CD8-positive, alpha-beta T cell (primary cell): ENCODE measurements at regions of chr5 and their contacts with region 1.

Region 1: DNA sequence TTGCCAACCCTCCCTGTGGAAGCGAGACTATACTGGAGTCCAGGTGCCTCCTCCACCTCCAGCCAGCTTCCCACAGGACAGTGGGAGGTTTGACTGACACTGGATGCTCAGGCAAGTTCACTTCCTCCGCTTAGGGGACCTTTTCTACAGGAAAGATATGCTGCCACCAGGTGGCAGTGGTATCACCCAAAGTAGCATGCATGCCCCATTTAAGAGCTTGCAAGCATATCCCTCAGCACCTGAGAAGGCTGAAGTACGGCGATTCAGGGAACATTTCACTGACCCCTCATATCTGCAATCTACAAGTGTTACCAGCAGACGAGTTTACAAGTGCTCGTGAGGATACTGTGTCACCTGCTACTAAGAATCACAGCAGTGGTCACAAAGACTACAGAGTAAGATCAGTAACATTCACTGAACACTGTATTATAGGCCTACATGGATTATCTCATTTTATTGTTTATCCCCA is 75.5 kb downstream of the KLHL3 start:
- DNase-seq: peak; percentile 37 to 84 (median 74)
- ATAC-seq: peak; percentile 94
- H3K4me3 ChIP-seq: no peak overlapping the region
- H3K4me3 Mint-ChIP-seq: no peak overlapping the region
- H3K27ac ChIP-seq: no peak overlapping the region
- H3K27ac Mint-ChIP-seq: no peak overlapping the region
- H3K4me1 ChIP-seq: no peaks in the 10 kb centered on the region
- H3K4me1 Mint-ChIP-seq: peaks cover 11% of the 10 kb centered on the region
- H3K27me3 ChIP-seq: no peaks in the 10 kb centered on the region
- H3K27me3 Mint-ChIP-seq: no peaks in the 10 kb centered on the region
- CTCF ChIP-seq: peak; percentile 75

Region 2: DNA sequence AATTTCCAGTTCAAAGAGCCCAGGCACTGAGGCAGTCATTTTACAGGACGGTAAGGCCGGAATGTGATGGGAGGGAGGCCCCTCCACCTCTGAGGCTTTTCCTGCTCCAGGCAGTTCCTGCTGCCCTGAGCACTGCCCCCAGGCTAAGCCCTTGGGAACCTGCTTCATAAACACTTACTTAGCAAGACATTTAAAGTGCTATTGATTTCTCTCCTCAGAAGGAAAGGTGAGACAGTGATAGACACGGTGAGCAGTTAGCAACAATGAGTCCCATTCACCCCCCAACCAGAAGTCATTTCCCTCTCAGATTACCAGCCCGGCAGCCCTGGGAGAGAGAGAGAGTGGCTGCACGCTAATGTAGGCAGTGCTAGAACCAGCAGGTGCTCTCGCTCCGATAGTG is 623.7 kb before region 1 on chr5:
- CTCF ChIA-PET with region 1: no interaction called
- POLR2A ChIA-PET with region 1: no interaction called
- intact Hi-C with region 1: no loop called
- DNase-seq: no peak
- ATAC-seq: no peak
- H3K4me3 ChIP-seq: no peak overlapping the region
- H3K4me3 Mint-ChIP-seq: no peak overlapping the region
- H3K27ac ChIP-seq: no peak overlapping the region
- H3K27ac Mint-ChIP-seq: no peak overlapping the region
- H3K4me1 ChIP-seq: no peaks in the 10 kb centered on the region
- H3K4me1 Mint-ChIP-seq: no peaks in the 10 kb centered on the region
- H3K27me3 ChIP-seq: no peaks in the 10 kb centered on the region
- H3K27me3 Mint-ChIP-seq: peaks cover 4% of the 10 kb centered on the region
- CTCF ChIP-seq: no peak

Region 3: GRCh38 chr5:137629646-137630045 is 30.7 kb before region 1 on chr5:
- CTCF ChIA-PET with region 1: interaction called, 26 read pairs
- POLR2A ChIA-PET with region 1: no interaction called
- intact Hi-C with region 1: loop called in 1 of 2 experiments (anchors 1 kb)
- DNase-seq: peak in 3 of 9 experiments; percentile 13 to 69 (median 58)
- ATAC-seq: peak; percentile 71
- H3K4me3 ChIP-seq: no peak overlapping the region
- H3K4me3 Mint-ChIP-seq: no peak overlapping the region
- H3K27ac ChIP-seq: no peak overlapping the region
- H3K27ac Mint-ChIP-seq: no peak overlapping the region
- H3K4me1 ChIP-seq: no peaks in the 10 kb centered on the region
- H3K4me1 Mint-ChIP-seq: no peaks in the 10 kb centered on the region
- H3K27me3 ChIP-seq: no peaks in the 10 kb centered on the region
- H3K27me3 Mint-ChIP-seq: no peaks in the 10 kb centered on the region
- CTCF ChIP-seq: peak; percentile 96

Region 4: GRCh38 chr5:137672019-137672418 is 11.6 kb after region 1 on chr5:
- CTCF ChIA-PET with region 1: interaction called, 20 read pairs
- POLR2A ChIA-PET with region 1: interaction called, 3 read pairs
- intact Hi-C with region 1: no loop called
- DNase-seq: no peak
- ATAC-seq: no peak
- H3K4me3 ChIP-seq: no peak overlapping the region
- H3K4me3 Mint-ChIP-seq: no peak overlapping the region
- H3K27ac ChIP-seq: no peak overlapping the region
- H3K27ac Mint-ChIP-seq: no peak overlapping the region
- H3K4me1 ChIP-seq: no peaks in the 10 kb centered on the region
- H3K4me1 Mint-ChIP-seq: no peaks in the 10 kb centered on the region
- H3K27me3 ChIP-seq: no peaks in the 10 kb centered on the region
- H3K27me3 Mint-ChIP-seq: no peaks in the 10 kb centered on the region
- CTCF ChIP-seq: no peak

Region 5: DNA sequence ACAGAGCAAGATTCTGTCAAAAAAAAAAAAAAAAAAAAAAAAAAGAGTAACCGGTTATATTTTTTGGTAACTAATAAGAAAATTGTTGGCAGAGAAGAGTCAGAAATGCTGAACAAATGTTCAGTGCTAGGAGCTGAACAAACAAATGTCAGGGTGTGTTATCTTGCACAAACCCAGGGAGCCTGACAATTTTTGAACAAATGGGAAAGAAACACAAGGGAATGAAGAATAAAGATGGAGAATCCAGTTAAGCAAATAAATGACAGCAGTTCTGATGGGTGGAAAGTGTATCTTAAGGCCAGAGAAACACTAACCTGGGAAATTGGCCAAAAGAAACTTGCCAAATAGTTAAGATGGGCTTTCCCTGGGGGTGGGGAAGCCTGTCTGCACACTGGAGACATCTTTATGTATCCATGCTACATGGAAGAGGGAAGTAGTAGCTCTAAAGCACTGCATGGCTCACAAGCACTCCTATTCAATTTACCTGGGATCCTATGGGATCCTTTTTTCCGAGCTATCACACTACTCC is 51.8 kb after region 1 on chr5:
- CTCF ChIA-PET with region 1: interaction called, 10 read pairs
- POLR2A ChIA-PET with region 1: no interaction called
- intact Hi-C with region 1: no loop called
- DNase-seq: no peak
- ATAC-seq: no peak
- H3K4me3 ChIP-seq: no peak overlapping the region
- H3K4me3 Mint-ChIP-seq: no peak overlapping the region
- H3K27ac ChIP-seq: no peak overlapping the region
- H3K27ac Mint-ChIP-seq: no peak overlapping the region
- H3K4me1 ChIP-seq: no peaks in the 10 kb centered on the region
- H3K4me1 Mint-ChIP-seq: peaks cover 5% of the 10 kb centered on the region
- H3K27me3 ChIP-seq: no peaks in the 10 kb centered on the region
- H3K27me3 Mint-ChIP-seq: no peaks in the 10 kb centered on the region
- CTCF ChIP-seq: no peak

Region 6: DNA sequence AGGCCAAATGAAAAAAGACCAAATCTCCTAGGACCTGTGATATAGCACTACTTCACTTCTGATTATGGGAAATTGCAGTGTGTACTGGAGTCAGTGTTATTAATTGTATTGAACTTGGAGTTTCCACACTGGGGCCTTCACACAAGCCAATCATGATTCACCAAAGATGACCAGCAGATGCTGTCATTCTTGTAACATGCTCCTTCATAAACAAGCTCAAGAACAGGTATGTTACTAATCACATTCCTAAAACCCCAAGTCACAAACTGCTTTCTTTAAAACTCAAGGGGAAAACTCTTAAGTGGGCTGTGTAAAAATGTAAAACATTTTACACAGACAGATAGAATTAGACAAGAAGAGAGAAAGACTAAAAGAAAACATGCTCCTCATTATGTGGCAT is 70.0 kb after region 1 on chr5:
- CTCF ChIA-PET with region 1: interaction called, 652 read pairs
- POLR2A ChIA-PET with region 1: no interaction called
- intact Hi-C with region 1: no loop called
- DNase-seq: no peak
- ATAC-seq: no peak
- H3K4me3 ChIP-seq: no peak overlapping the region
- H3K4me3 Mint-ChIP-seq: no peak overlapping the region
- H3K27ac ChIP-seq: no peak overlapping the region
- H3K27ac Mint-ChIP-seq: no peak overlapping the region
- H3K4me1 ChIP-seq: peaks cover 23% of the 10 kb centered on the region
- H3K4me1 Mint-ChIP-seq: peaks cover 20% of the 10 kb centered on the region
- H3K27me3 ChIP-seq: no peaks in the 10 kb centered on the region
- H3K27me3 Mint-ChIP-seq: no peaks in the 10 kb centered on the region
- CTCF ChIP-seq: no peak

Region 7: DNA sequence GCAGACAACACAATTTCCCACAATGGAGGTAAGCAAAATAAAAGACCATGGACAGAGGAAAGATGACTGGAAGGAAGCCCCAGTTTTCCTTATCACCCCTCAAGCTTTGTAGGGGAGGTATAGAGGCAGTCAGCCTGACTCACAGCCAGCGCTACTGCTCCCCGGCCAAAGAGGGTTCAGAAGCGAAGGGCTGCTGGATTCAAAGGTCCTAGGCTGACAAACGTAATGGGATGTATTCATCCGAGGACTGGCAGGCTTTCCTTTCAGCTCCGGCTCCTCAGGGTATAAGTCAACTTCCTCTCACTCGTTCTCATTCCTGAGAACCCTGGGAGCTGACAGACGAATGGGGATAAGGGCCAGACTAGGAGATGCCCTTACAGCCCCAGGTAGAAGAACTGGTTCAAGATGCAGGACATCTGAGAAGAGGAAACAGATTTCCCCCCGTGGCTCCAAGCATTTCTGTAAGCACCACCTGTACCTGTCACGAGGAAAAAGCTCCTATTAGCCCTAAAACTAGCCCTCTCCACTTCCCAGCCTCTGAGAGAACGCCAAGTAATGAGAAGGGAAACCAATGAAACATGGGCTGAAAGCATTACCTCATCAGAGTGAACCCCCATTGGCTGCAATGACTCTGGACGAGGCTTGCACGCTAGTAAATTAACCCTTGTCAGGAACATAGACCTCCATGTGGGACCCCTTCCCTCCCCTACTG is 394.6 kb after region 1 on chr5:
- CTCF ChIA-PET with region 1: no interaction called
- POLR2A ChIA-PET with region 1: no interaction called
- intact Hi-C with region 1: no loop called
- DNase-seq: no peak
- ATAC-seq: no peak
- H3K4me3 ChIP-seq: no peak overlapping the region
- H3K4me3 Mint-ChIP-seq: no peak overlapping the region
- H3K27ac ChIP-seq: no peak overlapping the region
- H3K27ac Mint-ChIP-seq: no peak overlapping the region
- H3K4me1 ChIP-seq: no peaks in the 10 kb centered on the region
- H3K4me1 Mint-ChIP-seq: no peaks in the 10 kb centered on the region
- H3K27me3 ChIP-seq: no peaks in the 10 kb centered on the region
- H3K27me3 Mint-ChIP-seq: peaks cover 5% of the 10 kb centered on the region
- CTCF ChIP-seq: no peak